Mammary epithelial cell (primary cell): ENCODE measurements at regions of chr6 and their contacts with region 1.

Region 1: DNA sequence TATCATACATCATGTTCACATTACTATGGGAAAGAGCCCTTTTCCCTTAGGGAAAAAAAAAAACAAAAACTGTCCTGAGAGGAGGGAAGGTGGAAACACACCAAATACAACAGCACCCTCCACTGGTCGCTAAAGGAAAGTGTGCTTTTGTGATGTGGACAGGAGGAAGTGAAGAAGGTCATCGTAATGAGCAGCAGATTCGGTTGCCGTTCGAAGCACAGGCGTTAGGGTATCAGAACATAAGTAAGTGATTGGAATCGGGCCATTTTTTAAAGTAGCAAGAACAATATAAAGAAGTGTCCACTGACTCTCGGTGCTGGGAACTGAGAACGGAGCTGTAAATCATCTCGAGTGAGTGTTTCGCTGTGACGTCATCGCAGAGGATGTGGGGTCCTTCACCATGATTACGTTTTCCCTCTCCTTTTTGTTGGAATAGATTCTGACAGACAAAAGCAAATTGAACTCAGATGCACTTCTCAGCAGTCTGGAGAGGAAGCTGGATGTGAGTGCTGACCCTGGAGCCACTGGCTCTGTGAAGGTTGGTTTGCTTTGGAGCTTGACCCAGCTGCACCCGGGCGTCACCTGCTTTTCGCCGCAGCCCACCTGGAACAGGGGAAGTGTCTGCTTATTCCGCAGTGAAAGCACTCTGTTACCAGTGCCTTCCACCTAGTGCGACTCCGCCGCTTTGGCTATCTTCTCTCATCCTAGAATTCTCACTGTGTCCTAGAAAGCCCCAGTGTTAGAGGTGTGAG is 203.6 kb upstream of the GMDS start:
- DNase-seq: peak; percentile 64
- H3K4me3 ChIP-seq: peak overlapping the region in 2 of 3 experiments; percentile 2 to 37
- H3K27ac ChIP-seq: no peak overlapping the region
- H3K4me1 ChIP-seq: peaks cover 6% of the 10 kb centered on the region
- H3K27me3 ChIP-seq: no peaks in the 10 kb centered on the region
- CTCF ChIP-seq: peak; percentile 83

Region 2: DNA sequence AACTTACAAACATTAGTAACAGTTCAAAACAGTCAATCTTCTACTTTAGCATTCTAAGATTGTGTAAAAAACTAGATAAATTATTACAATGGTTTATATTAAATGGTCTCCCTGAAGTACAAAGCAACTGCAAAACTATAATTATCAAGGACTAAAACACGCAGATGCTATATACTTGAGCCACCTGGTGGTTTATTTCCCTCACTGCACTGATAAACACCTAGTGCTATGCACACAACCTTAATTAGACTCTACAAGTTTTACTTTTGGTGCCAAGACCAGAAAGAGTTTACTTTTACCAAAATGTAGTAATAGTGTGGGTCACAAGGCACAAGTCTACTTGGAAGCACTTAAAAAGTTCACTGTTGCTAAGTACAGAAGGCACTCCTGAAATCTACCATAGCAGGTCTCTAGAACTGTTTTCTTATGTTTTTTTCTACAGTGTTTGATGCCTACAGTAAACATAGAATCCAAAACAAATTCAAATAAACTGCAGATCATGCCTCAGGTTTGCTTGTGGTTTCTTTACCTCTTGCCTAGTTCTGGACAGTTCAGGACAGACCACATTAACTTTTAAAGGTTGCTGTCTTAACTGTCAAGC is 252.8 kb before region 1 on chr6:
- CTCF ChIA-PET with region 1: no interaction called
- dilution Hi-C with region 1: no loop called
- in situ Hi-C with region 1: no loop called
- intact Hi-C with region 1: loop called (anchors 1 kb)
- DNase-seq: peak; percentile 40
- H3K4me3 ChIP-seq: no peak overlapping the region
- H3K27ac ChIP-seq: no peak overlapping the region
- H3K4me1 ChIP-seq: peaks cover 12% of the 10 kb centered on the region
- H3K27me3 ChIP-seq: no peaks in the 10 kb centered on the region
- CTCF ChIP-seq: peak; percentile 74 to 84

Region 3: GRCh38 chr6:2353412-2354137 is 95.4 kb before region 1 on chr6:
- CTCF ChIA-PET with region 1: interaction called, 22 read pairs
- dilution Hi-C with region 1: no loop called
- in situ Hi-C with region 1: loop called in 1 of 2 experiments (anchors 5 kb)
- intact Hi-C with region 1: loop called (anchors 1 kb)
- DNase-seq: peak; percentile 61
- H3K4me3 ChIP-seq: no peak overlapping the region
- H3K27ac ChIP-seq: no peak overlapping the region
- H3K4me1 ChIP-seq: no peaks in the 10 kb centered on the region
- H3K27me3 ChIP-seq: no peaks in the 10 kb centered on the region
- CTCF ChIP-seq: peak; percentile 78 to 80

Region 4: DNA sequence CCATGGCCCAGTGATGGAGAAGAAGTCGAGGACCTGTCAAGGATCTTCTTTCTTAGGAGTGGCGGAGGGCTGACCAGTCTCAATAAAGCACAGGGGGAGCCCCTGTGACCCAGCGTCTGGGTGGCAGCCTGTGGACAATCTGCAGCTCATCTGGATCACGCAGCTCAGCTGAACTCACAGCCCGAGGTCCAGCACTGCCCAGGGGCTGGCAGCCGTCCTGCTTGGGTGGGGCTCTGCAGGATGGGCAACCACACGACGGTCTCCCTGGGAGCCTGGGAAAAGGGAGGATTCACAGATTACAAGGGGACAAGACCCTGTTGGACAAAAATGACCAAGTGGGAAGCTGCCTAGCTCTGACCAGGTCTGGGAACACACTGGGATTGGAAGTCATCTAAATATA is 190.9 kb after region 1 on chr6:
- CTCF ChIA-PET with region 1: no interaction called
- dilution Hi-C with region 1: no loop called
- in situ Hi-C with region 1: loop called (anchors 5 to 10 kb)
- intact Hi-C with region 1: no loop called
- DNase-seq: no peak
- H3K4me3 ChIP-seq: no peak overlapping the region
- H3K27ac ChIP-seq: no peak overlapping the region
- H3K4me1 ChIP-seq: peaks cover 2% of the 10 kb centered on the region
- H3K27me3 ChIP-seq: no peaks in the 10 kb centered on the region
- CTCF ChIP-seq: no peak